H1 (cell line): ENCODE measurements at regions of chr19 and their contacts with region 1.

Region 1: GRCh38 chr19:58362272-58362994 is at the start of gene ZNF497:
- DNase-seq: peak; percentile 91 to 97
- H3K4me3 ChIP-seq: peak within 1 kb of the TSS; percentile 80 to 97 (median 96)
- H3K27ac ChIP-seq: peak within 1 kb of the TSS; percentile 82
- H3K4me1 ChIP-seq: peaks cover 0 to 8% (median 4%) of the 10 kb centered on the region in 4 experiments; a peak in 4 of 7 replicates
- H3K27me3 ChIP-seq: no peaks in the 10 kb centered on the region
- CTCF ChIP-seq: no peak
- EP300 ChIP-seq: no peak
- POLR2A ChIP-seq: peak; percentile 81 to 93
- RAD21 ChIP-seq: no peak
- total RNA-seq, gene ZNF497: 0.93 and 1.0 TPM in 2 replicates

Region 2: DNA sequence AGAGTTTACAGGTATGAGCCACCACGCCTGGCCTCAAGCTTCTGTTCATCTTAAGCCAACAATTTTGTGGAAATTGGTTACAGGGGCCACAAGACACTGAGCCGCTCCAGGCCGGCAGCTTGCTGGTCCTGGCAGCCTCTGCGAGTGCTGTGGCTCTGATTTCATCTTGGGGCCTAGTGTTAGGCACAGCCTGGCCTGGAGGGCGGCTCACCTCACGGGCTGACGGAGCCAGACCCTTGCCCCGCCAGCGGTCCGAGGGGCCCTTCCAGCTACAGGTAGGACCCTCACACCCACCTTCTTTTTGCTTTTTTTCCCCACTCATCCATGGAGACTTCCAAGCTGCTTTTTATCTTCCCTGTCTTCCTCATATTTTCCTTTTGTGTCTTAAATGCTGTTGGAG is 125.1 kb before region 1 on chr19:
- CTCF ChIA-PET with region 1: no interaction called
- POLR2A ChIA-PET with region 1: no interaction called
- DNase-seq: no peak
- H3K4me3 ChIP-seq: no peak overlapping the region
- H3K27ac ChIP-seq: no peak overlapping the region
- H3K4me1 ChIP-seq: no peaks in the 10 kb centered on the region
- H3K27me3 ChIP-seq: no peaks in the 10 kb centered on the region
- CTCF ChIP-seq: no peak
- EP300 ChIP-seq: no peak
- POLR2A ChIP-seq: no peak
- RAD21 ChIP-seq: no peak

Region 3: DNA sequence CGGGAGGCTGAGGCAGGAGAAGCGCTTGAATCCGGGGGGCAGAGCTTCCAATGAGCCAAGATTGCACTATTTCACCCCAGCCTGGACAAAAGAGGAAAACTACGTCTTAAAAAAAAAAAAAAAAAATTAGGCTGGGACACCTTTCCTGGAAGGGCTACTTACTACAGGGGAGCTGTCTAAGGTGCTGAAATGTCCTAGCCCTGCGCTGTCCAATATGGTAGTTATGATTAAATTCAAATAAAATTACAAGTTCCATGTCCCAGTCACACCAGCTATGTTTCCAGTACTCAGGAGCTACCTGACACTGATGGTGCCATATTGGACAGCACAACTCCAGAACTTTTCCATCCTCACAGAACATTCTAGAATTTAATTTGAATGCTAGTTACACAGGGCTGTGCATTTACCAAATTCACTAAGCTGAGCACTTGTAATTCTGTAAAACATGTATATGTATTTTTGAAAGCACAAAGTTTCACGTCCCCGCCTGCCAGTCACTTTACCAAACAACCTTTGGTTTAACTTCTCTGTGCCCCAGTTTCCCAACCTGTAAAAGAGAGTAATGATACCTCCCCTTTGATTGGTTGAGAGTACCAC is 44.9 kb before region 1 on chr19:
- CTCF ChIA-PET with region 1: no interaction called
- POLR2A ChIA-PET with region 1: no interaction called
- DNase-seq: no peak
- H3K4me3 ChIP-seq: no peak overlapping the region
- H3K27ac ChIP-seq: no peak overlapping the region
- H3K4me1 ChIP-seq: no peaks in the 10 kb centered on the region
- H3K27me3 ChIP-seq: no peaks in the 10 kb centered on the region; a peak in 1 of 7 replicates
- CTCF ChIP-seq: no peak
- EP300 ChIP-seq: no peak
- POLR2A ChIP-seq: no peak
- RAD21 ChIP-seq: no peak

Region 4: GRCh38 chr19:58346961-58347931 is 15.2 kb before region 1 on chr19:
- CTCF ChIA-PET with region 1: interaction called, 8 read pairs
- POLR2A ChIA-PET with region 1: interaction called, 102 read pairs
- DNase-seq: peak in 1 of 2 experiments; percentile 81
- H3K4me3 ChIP-seq: peak overlapping the region; percentile 78 to 88 (median 82)
- H3K27ac ChIP-seq: no peak overlapping the region
- H3K4me1 ChIP-seq: no peaks in the 10 kb centered on the region; a peak in 1 of 7 replicates
- H3K27me3 ChIP-seq: 0 out of 7 replicates have a peak, but pooled peaks cover 0 to 3% (median 0%) of the 10 kb centered on the region in 4 experiments
- CTCF ChIP-seq: no peak
- EP300 ChIP-seq: no peak
- POLR2A ChIP-seq: 0 out of 3 replicates have a peak, but pooled peaks of 1 of the 2 experiments have one; percentile 35
- RAD21 ChIP-seq: no peak

Region 5: GRCh38 chr19:58380722-58381466 is 18.5 kb after region 1 on chr19 and contains the start of gene ZNF837:
- CTCF ChIA-PET with region 1: interaction called, 5 read pairs
- POLR2A ChIA-PET with region 1: interaction called, 94 read pairs
- DNase-seq: peak; percentile 96 to 100
- H3K4me3 ChIP-seq: peak within 1 kb of the TSS; percentile 56 to 77 (median 64)
- H3K27ac ChIP-seq: peak within 1 kb of the TSS; percentile 72; the same call in 1 of the 2 replicates
- H3K4me1 ChIP-seq: peaks cover 0 to 11% (median 8%) of the 10 kb centered on the region in 4 experiments; a peak in 6 of 7 replicates
- H3K27me3 ChIP-seq: no peaks in the 10 kb centered on the region
- CTCF ChIP-seq: no peak
- EP300 ChIP-seq: no peak
- POLR2A ChIP-seq: peak; percentile 89 to 92
- RAD21 ChIP-seq: no peak; a peak in 1 of 4 replicates
- total RNA-seq, gene ZNF837: 1.9 and 2.7 TPM in 2 replicates

Region 6: DNA sequence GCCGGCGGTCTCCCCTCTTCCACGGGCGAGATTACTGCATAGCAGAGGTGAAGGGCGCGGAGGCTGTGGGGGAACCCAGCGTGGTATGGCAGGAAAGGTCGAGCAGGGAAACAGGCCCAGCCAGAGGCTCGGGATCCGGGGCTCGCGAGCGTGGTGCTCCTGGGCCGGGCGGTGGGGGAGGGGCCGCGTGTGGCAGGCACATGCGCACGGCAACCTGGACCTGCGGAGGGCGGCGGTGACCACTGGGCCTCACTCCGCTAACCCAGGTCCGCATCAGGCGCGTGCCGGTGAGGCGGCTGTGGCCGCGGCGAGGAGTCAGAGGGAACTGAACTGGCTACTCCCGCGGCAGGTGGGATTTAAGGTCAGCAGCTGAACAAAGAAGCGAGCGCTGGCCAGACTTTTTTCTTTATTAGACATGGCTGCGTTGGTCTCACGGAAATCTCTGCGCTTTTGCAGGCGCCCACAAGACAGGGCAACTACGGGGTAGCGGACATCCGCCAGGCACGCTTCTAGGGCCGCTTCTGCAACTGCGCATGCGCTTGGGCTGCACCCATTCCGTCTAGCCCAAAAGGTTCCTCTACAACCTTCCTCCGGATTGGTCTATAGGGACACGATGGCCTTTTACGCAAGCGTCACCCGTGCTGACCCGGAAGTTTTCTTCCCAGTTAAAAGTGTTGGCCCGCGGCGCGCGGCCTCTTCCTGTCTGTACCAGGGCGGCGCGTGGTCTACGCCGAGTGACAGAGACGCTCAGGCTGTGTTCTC is 24.3 kb after region 1 on chr19 and contains the start of gene RPS5:
- CTCF ChIA-PET with region 1: interaction called, 3 read pairs
- POLR2A ChIA-PET with region 1: interaction called, 39 read pairs
- DNase-seq: peak; percentile 93 to 95
- H3K4me3 ChIP-seq: peak within 1 kb of the TSS; percentile 82 to 99 (median 92)
- H3K27ac ChIP-seq: peak within 1 kb of the TSS; percentile 94
- H3K4me1 ChIP-seq: peaks cover 0 to 15% (median 9%) of the 10 kb centered on the region in 4 experiments; a peak in 6 of 7 replicates
- H3K27me3 ChIP-seq: no peaks in the 10 kb centered on the region
- CTCF ChIP-seq: no peak
- EP300 ChIP-seq: no peak
- POLR2A ChIP-seq: peak; percentile 53 to 93
- RAD21 ChIP-seq: no peak; a peak in 1 of 4 replicates
- total RNA-seq, gene RPS5: 1,554 and 1,557 TPM in 2 replicates

Region 7: GRCh38 chr19:58395220-58396029 is 33.0 kb after region 1 on chr19 and contains the start of gene RNF225:
- CTCF ChIA-PET with region 1: interaction called, 4 read pairs
- POLR2A ChIA-PET with region 1: interaction called, 23 read pairs
- DNase-seq: peak; percentile 66 to 83
- H3K4me3 ChIP-seq: peak within 1 kb of the TSS; percentile 6 to 67 (median 36)
- H3K27ac ChIP-seq: no peak within 1 kb of the TSS
- H3K4me1 ChIP-seq: peaks cover 0 to 22% (median 13%) of the 10 kb centered on the region in 4 experiments; a peak in 5 of 7 replicates
- H3K27me3 ChIP-seq: peaks cover 3 to 17% (median 11%) of the 10 kb centered on the region in 4 experiments; a peak in 6 of 7 replicates
- CTCF ChIP-seq: no peak
- EP300 ChIP-seq: no peak
- POLR2A ChIP-seq: peak; percentile 24 to 84
- RAD21 ChIP-seq: no peak
- total RNA-seq, gene RNF225: 1.0 and 1.2 TPM in 2 replicates